ENCODE measurements at regions of chr6 and their contacts with region 1.

Region 1: DNA sequence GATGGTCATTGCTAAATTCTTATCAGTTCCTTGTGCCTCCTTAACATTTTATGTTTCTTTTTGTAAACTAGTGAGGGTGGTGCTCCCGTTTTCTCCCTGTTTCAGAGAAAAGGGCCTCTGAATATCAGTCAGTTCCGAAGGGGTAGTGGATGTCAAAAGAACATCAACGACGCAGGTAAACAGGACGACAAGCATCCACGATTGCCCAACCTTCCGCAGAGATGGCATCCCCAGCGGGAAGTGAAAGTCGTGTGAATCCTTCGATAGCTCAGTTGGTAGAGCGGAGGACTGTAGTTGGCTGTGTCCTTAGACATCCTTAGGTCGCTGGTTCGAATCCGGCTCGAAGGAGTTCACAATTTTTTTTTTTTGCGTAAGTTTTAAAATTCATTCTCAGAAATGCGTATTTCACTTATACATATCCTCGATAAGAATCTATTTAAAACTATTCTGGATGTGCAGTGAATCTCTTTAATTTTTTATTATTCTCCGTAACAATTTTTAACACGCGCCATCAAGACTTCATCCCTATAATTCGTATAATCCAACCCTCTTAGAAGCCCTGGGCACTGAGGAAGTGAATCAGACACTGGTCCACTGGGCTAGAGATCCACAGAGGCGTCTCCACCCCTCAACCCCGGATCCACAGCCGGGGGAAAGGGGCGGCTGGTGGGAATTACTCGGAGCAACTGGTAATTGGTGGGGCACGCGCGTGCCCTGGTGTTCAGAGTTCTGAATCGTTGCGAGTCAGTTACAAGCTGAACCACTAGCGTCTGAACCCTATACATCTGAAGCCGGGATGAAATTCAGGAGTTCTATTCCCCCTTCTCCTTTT is 27.9 kb upstream of the ABT1 start:
- DNase-seq: peak; percentile 99
- H3K4me3 Mint-ChIP-seq: peak overlapping the region; percentile 88
- H3K27ac Mint-ChIP-seq: peak overlapping the region; percentile 88
- H3K4me1 Mint-ChIP-seq: peaks cover 32% of the 10 kb centered on the region
- H3K27me3 Mint-ChIP-seq: peaks cover 5% of the 10 kb centered on the region

Region 2: DNA sequence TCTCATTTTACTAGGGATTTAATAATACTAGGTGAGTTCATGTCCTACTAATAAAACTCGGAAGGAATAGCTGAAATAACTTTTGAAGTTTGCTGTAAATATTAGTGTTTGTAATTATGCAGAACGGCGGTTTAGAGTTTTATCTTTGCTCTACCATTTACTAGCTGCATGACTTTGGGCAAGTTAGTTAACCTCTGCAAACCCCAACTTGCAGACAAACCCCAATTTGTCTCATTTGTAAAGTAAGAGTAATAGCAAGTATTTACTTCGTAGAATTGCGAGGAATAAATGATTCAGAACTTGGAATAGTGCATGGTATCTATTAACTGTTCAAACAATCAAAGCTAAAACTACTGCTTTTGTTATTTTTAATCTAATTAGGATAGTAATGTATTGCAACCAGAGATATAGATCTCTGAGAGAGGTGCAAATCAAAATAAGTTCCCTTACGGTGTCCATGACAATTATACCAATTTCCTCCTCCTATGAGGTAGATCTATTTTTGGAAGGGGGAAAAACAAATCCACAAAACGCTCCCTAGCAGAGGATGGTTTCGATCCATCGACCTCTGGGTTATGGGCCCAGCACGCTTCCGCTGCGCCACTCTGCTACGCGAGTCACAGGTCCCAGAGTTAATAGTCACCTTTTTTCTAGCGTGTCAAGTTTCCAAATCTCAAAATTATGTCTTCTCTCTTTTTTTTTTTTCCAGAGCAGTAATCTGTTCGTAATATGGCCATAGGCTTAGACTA is 238.9 kb before region 1 on chr6:
- intact Hi-C with region 1: loop called (anchors 1 kb)
- DNase-seq: peak; percentile 89
- H3K4me3 Mint-ChIP-seq: peak overlapping the region; percentile 87
- H3K27ac Mint-ChIP-seq: peak overlapping the region; percentile 86
- H3K4me1 Mint-ChIP-seq: peaks cover 48% of the 10 kb centered on the region
- H3K27me3 Mint-ChIP-seq: peaks cover 25% of the 10 kb centered on the region

Region 3: GRCh38 chr6:26342106-26343004 is 226.5 kb before region 1 on chr6:
- intact Hi-C with region 1: loop called (anchors 1 kb)
- DNase-seq: peak; percentile 71
- H3K4me3 Mint-ChIP-seq: peak overlapping the region; percentile 92
- H3K27ac Mint-ChIP-seq: peak overlapping the region; percentile 84
- H3K4me1 Mint-ChIP-seq: peaks cover 16% of the 10 kb centered on the region
- H3K27me3 Mint-ChIP-seq: peaks cover 5% of the 10 kb centered on the region

Region 4: GRCh38 chr6:26532699-26533531 is 35.9 kb before region 1 on chr6:
- intact Hi-C with region 1: loop called (anchors 1 kb)
- DNase-seq: peak; percentile 97
- H3K4me3 Mint-ChIP-seq: peak overlapping the region; percentile 96
- H3K27ac Mint-ChIP-seq: peak overlapping the region; percentile 97
- H3K4me1 Mint-ChIP-seq: peaks cover 38% of the 10 kb centered on the region
- H3K27me3 Mint-ChIP-seq: peaks cover 2% of the 10 kb centered on the region

Region 5: DNA sequence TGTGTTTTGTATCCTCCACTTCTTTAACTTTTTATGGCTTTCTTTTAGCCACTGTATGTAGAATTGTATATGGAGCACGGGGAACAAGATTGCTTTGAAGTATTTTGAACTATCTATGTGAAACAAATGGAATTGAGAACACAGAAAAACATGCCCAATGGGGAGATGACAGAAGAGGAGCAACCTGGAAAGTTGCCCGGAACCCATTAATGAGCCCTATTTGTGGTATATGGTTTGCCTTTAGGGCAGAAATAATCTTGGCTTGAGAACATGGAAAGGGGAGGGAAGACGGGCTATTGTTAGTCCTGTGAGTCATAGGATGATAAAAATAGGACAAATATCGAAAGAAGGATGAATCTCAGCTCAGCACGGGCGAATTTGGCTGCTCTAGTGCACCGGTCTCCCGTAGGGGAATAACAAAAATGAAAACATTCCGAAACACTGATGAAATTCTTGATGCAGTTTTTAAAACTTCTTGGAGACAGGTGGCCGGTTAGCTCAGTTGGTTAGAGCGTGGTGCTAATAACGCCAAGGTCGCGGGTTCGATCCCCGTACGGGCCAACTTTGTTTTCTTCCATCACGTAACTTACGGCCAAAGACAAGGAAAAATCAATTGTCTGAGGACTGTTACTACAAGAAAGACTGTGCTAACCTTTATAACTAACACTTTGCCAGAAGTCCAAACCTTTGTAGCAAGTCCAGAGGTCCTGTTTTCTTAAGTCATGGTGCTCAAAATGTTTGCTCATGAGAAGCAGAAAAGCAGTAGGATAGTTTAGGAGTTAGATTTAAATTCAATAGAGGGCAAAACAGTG is 15.0 kb before region 1 on chr6:
- intact Hi-C with region 1: loop called (anchors 1 kb)
- DNase-seq: peak; percentile 94
- H3K4me3 Mint-ChIP-seq: no peak overlapping the region
- H3K27ac Mint-ChIP-seq: no peak overlapping the region
- H3K4me1 Mint-ChIP-seq: peaks cover 22% of the 10 kb centered on the region
- H3K27me3 Mint-ChIP-seq: peaks cover 2% of the 10 kb centered on the region

Region 6: DNA sequence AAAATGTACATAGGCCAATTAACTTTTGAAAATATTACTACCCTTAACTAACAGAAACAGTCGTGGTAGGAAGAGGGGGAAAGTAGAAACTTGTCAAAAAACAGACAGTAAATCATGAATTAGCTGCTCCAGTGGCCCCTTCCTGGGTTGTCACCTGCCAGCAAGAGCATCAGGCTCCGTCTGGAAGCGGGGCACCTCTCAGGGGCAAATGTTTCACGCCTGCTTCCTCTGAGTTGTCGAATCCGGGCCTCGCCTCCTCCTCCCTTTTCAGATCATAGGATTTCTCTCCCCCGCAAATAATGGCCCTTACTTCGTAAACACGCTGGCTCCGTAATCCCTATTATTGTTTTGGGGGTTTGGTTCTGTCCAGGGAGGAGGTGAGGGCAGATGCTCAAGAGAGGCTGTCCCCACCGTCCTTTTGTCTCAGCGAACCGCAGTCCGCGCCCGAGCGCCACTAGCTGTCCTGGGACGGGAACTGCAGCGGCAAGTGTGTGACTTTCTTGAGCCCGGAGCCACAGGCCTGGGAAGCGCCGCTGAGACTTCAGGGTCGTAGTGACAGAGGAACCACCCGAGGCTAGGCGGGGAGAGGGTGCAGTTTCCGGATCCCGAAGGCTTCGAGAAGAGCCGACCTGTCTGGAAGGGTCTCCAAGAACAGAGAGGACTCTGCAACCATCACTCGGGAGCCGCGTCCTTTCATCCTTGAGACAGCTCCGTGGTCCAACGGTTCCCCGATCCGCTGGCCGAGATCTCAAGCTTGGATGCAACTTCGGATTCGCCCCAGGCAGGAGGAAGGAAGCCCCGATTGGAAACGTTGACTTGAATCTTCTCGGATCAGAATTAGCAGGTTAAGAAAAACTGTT is 1118.6 kb after region 1 on chr6:
- intact Hi-C with region 1: loop called (anchors 10 kb)
- DNase-seq: peak; percentile 92
- H3K4me3 Mint-ChIP-seq: peak overlapping the region; percentile 91
- H3K27ac Mint-ChIP-seq: peak overlapping the region; percentile 86
- H3K4me1 Mint-ChIP-seq: peaks cover 18% of the 10 kb centered on the region
- H3K27me3 Mint-ChIP-seq: peaks cover 21% of the 10 kb centered on the region

Region 7: GRCh38 chr6:28355743-28356665 is 1787.2 kb after region 1 on chr6:
- intact Hi-C with region 1: no loop called
- DNase-seq: peak; percentile 91
- H3K4me3 Mint-ChIP-seq: peak overlapping the region; percentile 93
- H3K27ac Mint-ChIP-seq: peak overlapping the region; percentile 79
- H3K4me1 Mint-ChIP-seq: peaks cover 16% of the 10 kb centered on the region
- H3K27me3 Mint-ChIP-seq: no peaks in the 10 kb centered on the region

Measured in activated CD4-positive, alpha-beta T cell treated with anti-CD3 and anti-CD28 coated beads, Interleukin-2, amount 10 ng/mL, durations not matched to agents 24 days and 14 days (primary cell).